Activated naive CD4-positive, alpha-beta T cell treated with anti-CD3 and anti-CD28 coated beads for 36 hours (primary cell): ENCODE measurements at regions of chr19 and their contacts with region 1.

Region 1: GRCh38 chr19:52748336-52748950 is 13.6 kb upstream of the ZNF611 start:
- DNase-seq: no peak
- H3K4me3 Mint-ChIP-seq: no peak overlapping the region
- H3K27ac Mint-ChIP-seq: no peak overlapping the region
- H3K4me1 Mint-ChIP-seq: no peaks in the 10 kb centered on the region
- H3K27me3 Mint-ChIP-seq: no peaks in the 10 kb centered on the region

Region 2: GRCh38 chr19:52248241-52248640 is 500.2 kb before region 1 on chr19:
- CTCF ChIA-PET with region 1: interaction called, 4 read pairs
- intact Hi-C with region 1: loop called (anchors 1 kb)
- DNase-seq: peak; percentile 85
- H3K4me3 Mint-ChIP-seq: no peak overlapping the region
- H3K27ac Mint-ChIP-seq: no peak overlapping the region
- H3K4me1 Mint-ChIP-seq: no peaks in the 10 kb centered on the region
- H3K27me3 Mint-ChIP-seq: no peaks in the 10 kb centered on the region

Region 3: DNA sequence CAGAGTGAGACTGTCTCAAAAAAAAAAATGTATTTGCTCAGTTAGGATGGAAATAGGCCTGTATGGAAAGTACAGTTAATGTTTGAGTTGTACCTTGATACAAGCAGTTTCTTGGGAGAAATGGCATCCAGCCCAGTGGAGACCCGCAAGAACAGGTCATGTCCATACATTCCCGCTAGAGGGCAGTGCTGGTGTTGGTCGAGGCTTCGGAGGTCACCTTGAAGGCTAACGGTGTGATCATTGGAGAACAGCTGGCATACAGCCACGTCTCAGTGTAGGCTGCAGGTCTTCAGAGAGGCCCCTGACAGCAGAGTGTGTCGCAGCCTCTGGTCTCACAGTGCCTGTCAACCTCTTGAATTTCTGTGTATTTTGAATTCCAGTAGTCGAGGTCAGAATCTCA is 404.9 kb before region 1 on chr19:
- CTCF ChIA-PET with region 1: interaction called, 3 read pairs
- intact Hi-C with region 1: loop called (anchors 1 kb)
- DNase-seq: peak; percentile 59
- H3K4me3 Mint-ChIP-seq: no peak overlapping the region
- H3K27ac Mint-ChIP-seq: no peak overlapping the region
- H3K4me1 Mint-ChIP-seq: no peaks in the 10 kb centered on the region
- H3K27me3 Mint-ChIP-seq: no peaks in the 10 kb centered on the region

Region 4: DNA sequence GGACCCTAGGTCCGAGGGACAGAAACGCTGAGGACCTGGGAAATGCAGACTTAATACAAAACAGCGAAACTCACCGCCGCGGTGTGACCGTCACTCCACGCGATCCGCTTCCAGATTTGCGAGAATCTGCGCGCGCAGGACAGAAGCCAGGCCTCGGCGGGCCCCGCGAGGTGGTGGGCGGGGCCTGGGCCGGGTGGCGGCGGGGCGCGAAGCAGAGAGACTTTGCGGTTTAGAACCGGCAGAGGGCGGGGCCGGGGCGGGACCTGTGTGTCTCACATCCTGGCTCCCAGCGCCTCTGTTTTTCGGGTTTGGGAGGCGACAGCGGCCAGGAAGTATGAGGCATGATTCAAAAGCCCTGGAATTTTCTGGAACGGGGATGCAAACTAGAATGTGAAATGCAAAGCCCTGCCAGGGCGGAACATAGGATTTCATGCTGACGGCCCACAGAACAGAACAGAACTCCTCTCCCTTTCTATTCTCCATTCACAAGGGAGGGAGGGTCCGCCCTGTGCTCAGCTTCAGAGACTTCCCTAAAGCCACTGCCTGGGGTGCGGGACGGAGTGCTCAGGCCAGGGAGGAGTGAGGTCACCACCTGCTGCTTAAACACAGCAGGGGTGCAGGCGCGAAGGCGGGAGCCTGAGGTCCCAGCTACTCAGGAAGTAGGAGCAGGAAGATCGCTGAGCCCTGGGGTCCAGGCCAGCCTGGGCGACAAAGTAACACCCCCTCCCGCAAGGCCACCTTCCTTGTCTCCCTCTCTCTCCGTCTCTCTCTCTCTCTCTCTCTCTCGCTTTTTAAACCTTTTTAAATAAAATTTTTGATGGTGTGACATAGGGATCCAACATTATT is 57.9 kb before region 1 on chr19:
- CTCF ChIA-PET with region 1: no interaction called
- intact Hi-C with region 1: no loop called
- DNase-seq: peak; percentile 95
- H3K4me3 Mint-ChIP-seq: peak overlapping the region; percentile 96
- H3K27ac Mint-ChIP-seq: peak overlapping the region; percentile 93
- H3K4me1 Mint-ChIP-seq: peaks cover 17% of the 10 kb centered on the region
- H3K27me3 Mint-ChIP-seq: no peaks in the 10 kb centered on the region